HCT116 (cell line): ENCODE measurements at regions of chr14 and their contacts with region 1.

Region 1: GRCh38 chr14:60195179-60195810 is 30.1 kb upstream of the DHRS7 start:
- DNase-seq: no peak
- ATAC-seq: no peak
- H3K4me3 ChIP-seq: no peak overlapping the region
- H3K27ac ChIP-seq: no peak overlapping the region
- H3K4me1 ChIP-seq: peaks cover 0 to 9% of the 10 kb centered on the region in 2 experiments; a peak in 1 of 4 replicates
- H3K27me3 ChIP-seq: no peaks in the 10 kb centered on the region
- CTCF ChIP-seq: peak in 1 of 3 experiments; percentile 7; a peak in 1 of 6 replicates
- POLR2A ChIP-seq: no peak
- RAD21 ChIP-seq: peak; percentile 36; the same call in 1 of the 2 replicates

Region 2: DNA sequence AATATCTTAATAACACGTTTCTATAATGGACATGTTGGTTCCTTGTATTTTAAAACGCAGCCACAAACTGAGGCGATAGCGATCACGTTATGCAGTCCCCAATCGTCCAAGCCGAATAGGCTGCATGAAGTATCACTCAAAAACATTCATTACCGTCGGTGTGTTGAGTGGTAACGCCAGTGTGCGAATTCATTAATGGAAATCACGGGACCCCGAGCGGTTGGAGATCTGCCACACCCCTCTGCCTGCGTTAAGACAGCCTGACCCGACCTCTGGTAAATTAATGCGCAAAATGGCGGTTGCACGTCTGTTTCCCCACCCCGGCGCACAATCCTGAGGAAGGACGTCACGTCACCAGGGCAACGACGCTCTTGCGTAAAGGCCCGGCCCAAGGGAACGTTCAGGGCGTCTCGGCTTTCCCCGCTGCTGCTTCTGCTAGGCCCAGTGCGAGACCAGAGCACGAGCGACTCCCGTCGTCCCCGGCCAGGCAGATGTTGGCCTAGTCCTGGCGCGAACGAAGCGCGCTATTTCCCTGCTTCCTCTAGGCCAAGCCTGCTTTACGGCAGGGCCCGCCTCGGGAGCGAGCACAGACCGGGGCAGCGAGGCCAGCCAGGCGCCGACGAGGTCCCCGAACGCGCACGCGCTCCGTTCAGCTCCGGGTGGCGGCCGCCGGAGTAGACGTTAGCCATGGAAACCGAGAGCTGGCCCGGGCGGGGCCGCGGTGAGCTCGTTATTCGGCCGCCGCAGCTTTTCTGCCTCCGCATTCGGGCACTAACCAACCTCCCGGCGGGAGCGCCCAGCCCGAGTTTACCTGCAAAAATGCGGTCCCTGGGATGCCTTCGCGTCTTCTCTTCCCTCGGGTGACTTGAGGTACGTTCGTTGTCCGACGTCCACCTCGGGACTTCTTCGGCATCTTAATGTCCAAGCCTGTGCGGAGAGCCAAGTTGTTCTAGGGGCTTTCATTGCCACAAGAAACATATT is 103.5 kb before region 1 on chr14 and contains the start of gene PCNX4:
- CTCF ChIA-PET with region 1: no interaction called
- POLR2A ChIA-PET with region 1: no interaction called
- RAD21 ChIA-PET with region 1: no interaction called
- intact Hi-C with region 1: no loop called
- DNase-seq: peak; percentile 98
- ATAC-seq: peak; percentile 94
- H3K4me3 ChIP-seq: peak within 1 kb of the TSS; percentile 67 to 75
- H3K27ac ChIP-seq: peak within 1 kb of the TSS; percentile 96
- H3K4me1 ChIP-seq: peaks cover 12 to 24% of the 10 kb centered on the region in 2 experiments
- H3K27me3 ChIP-seq: no peaks in the 10 kb centered on the region
- CTCF ChIP-seq: no peak
- POLR2A ChIP-seq: peak; percentile 92
- RAD21 ChIP-seq: no peak
- total RNA-seq, gene PCNX4: 48.4 TPM

Region 3: GRCh38 chr14:60331201-60332045 is 136.1 kb after region 1 on chr14:
- CTCF ChIA-PET with region 1: no interaction called
- POLR2A ChIA-PET with region 1: interaction called, 3 read pairs
- RAD21 ChIA-PET with region 1: no interaction called
- intact Hi-C with region 1: loop called (anchors 10 kb)
- DNase-seq: peak; percentile 67
- ATAC-seq: peak; percentile 86
- H3K4me3 ChIP-seq: peak overlapping the region; percentile 47 to 55
- H3K27ac ChIP-seq: peak overlapping the region; percentile 56
- H3K4me1 ChIP-seq: peaks cover 3 to 11% of the 10 kb centered on the region in 2 experiments; a peak in 2 of 4 replicates
- H3K27me3 ChIP-seq: no peaks in the 10 kb centered on the region
- CTCF ChIP-seq: peak; percentile 69 to 91 (median 80); a peak in 5 of 6 replicates
- POLR2A ChIP-seq: no peak
- RAD21 ChIP-seq: peak; percentile 63